ENCODE measurements at regions of chr12 and their contacts with region 1.

Region 1: DNA sequence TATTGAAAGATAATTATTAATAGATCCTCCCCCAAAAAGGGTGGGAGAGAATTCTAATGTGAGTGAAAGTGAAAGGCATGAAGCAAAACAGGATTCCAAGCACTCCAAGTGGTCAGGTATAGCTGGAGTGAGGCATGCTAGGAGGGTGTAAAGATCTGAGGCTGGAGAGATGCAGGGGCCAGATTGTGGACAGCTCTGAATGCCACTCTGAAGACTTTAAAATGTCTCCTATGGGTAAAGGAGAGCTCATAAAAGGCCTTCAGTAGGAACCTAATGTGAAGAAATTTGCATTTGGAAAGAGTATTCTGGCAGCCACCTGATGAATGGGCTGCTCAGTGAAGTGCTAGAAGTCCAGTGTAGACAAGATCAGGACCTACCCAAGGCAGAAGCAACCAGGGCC is 68.9 kb downstream of the DNAI7 start:
- DNase-seq: no peak
- H3K4me3 ChIP-seq: no peak overlapping the region
- H3K27ac ChIP-seq: no peak overlapping the region
- H3K4me1 ChIP-seq: no peaks in the 10 kb centered on the region
- H3K27me3 ChIP-seq: no peaks in the 10 kb centered on the region
- CTCF ChIP-seq: no peak

Region 2: DNA sequence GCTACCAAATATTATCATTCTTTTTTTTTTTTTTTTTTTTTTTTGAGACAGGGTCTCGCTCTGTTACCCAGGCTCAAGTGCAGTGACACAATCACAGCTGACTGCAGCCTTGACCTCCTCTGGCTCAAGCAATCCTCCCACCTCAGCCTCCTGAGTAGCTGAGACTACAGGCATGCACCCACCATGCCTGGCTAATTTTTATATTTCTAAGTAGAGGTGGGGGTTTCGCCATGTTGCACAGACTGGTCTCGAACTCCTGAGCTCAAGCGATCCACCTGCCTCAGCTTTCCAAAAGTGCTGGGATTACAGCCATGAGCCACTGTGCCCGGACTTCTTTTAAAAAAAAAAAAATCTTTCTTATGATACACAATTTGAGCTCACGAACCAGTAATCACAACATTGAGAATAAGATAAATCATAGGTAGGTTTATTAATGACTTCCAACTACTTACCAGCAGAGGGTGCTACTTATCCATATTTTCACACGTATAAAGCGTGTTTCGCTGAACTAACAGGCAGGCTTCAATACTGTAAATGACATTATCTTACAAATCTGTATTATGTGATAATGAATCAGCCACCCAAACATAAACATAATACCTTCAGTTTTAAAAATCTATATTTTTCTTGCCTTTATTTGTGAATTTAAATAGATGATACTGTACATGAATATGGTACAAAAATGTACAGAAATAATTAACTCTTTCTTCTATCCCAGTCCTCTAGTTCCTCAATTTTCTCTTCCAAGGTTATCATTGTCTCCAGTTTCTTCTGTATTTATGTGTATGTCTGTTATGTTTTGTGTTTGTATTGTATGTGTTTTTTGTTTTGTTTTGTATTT is 134.6 kb before region 1 on chr12:
- intact Hi-C with region 1: loop called (anchors 5 kb)
- DNase-seq: peak in 2 of 5 donors; percentile 63 to 64
- H3K4me3 ChIP-seq: no peak overlapping the region
- H3K27ac ChIP-seq: no peak overlapping the region
- H3K4me1 ChIP-seq: no peaks in the 10 kb centered on the region
- H3K27me3 ChIP-seq: no peaks in the 10 kb centered on the region
- CTCF ChIP-seq: peak; percentile 68

Region 3: GRCh38 chr12:25025260-25025659 is 100.8 kb before region 1 on chr12:
- intact Hi-C with region 1: no loop called
- DNase-seq: no peak
- H3K4me3 ChIP-seq: no peak overlapping the region
- H3K27ac ChIP-seq: no peak overlapping the region
- H3K4me1 ChIP-seq: no peaks in the 10 kb centered on the region
- H3K27me3 ChIP-seq: no peaks in the 10 kb centered on the region
- CTCF ChIP-seq: no peak